ENCODE measurements at regions of chr11 and their contacts with region 1.

Region 1: GRCh38 chr11:18203723-18204122 is 31.1 kb downstream of the MRGPRX4 start:
- DNase-seq: no peak
- ATAC-seq: peak; percentile 87
- H3K4me3 ChIP-seq: no peak overlapping the region
- H3K27ac ChIP-seq: no peak overlapping the region
- H3K4me1 ChIP-seq: no peaks in the 10 kb centered on the region
- H3K27me3 ChIP-seq: no peaks in the 10 kb centered on the region; a peak in 1 of 4 replicates
- CTCF ChIP-seq: peak; percentile 55 to 62 (median 56)
- EP300 ChIP-seq: no peak
- POLR2A ChIP-seq: no peak
- RAD21 ChIP-seq: peak; percentile 54

Region 2: DNA sequence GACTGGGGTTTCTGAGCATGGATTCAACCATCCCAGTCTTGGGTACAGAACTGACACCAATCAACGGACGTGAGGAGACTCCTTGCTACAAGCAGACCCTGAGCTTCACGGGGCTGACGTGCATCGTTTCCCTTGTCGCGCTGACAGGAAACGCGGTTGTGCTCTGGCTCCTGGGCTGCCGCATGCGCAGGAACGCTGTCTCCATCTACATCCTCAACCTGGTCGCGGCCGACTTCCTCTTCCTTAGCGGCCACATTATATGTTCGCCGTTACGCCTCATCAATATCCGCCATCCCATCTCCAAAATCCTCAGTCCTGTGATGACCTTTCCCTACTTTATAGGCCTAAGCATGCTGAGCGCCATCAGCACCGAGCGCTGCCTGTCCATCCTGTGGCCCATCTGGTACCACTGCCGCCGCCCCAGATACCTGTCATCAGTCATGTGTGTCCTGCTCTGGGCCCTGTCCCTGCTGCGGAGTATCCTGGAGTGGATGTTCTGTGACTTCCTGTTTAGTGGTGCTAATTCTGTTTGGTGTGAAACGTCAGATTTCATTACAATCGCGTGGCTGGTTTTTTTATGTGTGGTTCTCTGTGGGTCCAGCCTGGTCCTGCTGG is 66.4 kb before region 1 on chr11:
- CTCF ChIA-PET with region 1: no interaction called
- POLR2A ChIA-PET with region 1: no interaction called
- RAD21 ChIA-PET with region 1: no interaction called
- SMC1A ChIA-PET with region 1: no interaction called
- in situ Hi-C with region 1: no loop called
- intact Hi-C with region 1: no loop called
- DNase-seq: no peak
- ATAC-seq: no peak
- H3K4me3 ChIP-seq: no peak overlapping the region
- H3K27ac ChIP-seq: no peak overlapping the region
- H3K4me1 ChIP-seq: no peaks in the 10 kb centered on the region
- H3K27me3 ChIP-seq: no peaks in the 10 kb centered on the region
- CTCF ChIP-seq: no peak
- EP300 ChIP-seq: no peak
- POLR2A ChIP-seq: no peak
- RAD21 ChIP-seq: no peak

Region 3: DNA sequence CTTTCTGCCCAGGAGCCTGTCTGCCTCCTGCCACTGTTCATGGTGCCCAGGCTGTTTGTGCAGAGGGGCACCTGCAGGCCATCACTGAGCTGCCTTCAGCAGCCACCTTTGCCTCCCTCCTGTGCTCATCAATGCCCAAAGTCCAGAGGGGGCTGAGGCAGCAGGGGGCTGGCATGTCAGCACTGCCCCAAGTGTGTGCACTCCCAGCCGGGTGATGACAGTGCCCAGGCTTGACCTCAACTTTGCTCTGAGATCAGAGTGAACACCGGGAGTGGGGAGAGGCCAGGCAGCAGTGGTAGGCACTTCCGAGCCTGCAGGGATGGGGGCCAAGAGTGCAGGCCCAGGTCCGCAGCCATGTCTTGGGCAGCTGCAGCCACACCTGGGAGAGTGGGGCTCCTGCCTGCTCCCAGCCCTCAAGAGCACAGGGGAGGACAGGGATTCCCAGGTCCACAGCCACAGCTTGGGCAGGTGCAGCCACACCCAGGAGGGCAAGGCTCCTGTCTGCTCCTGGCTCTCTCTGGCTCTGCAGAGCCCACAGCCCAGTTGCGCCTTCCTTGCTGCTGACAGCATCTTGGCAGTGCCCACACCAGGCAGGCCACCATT is 17.7 kb after region 1 on chr11:
- CTCF ChIA-PET with region 1: interaction called, 10 read pairs
- POLR2A ChIA-PET with region 1: no interaction called
- RAD21 ChIA-PET with region 1: no interaction called
- SMC1A ChIA-PET with region 1: interaction called, 4 read pairs
- in situ Hi-C with region 1: no loop called
- intact Hi-C with region 1: no loop called
- DNase-seq: no peak
- ATAC-seq: no peak
- H3K4me3 ChIP-seq: no peak overlapping the region
- H3K27ac ChIP-seq: no peak overlapping the region
- H3K4me1 ChIP-seq: no peaks in the 10 kb centered on the region
- H3K27me3 ChIP-seq: no peaks in the 10 kb centered on the region
- CTCF ChIP-seq: no peak
- EP300 ChIP-seq: no peak
- POLR2A ChIP-seq: no peak
- RAD21 ChIP-seq: no peak